OCI-LY7 (cell line): ENCODE measurements at regions of chr14 and their contacts with region 1.

Region 1: GRCh38 chr14:77616454-77617229 is at the start of gene SPTLC2:
- DNase-seq: peak; percentile 99
- H3K4me3 ChIP-seq: peak within 1 kb of the TSS; percentile 95
- H3K27ac ChIP-seq: peak within 1 kb of the TSS; percentile 42
- H3K4me1 ChIP-seq: peaks cover 40% of the 10 kb centered on the region
- CTCF ChIP-seq: peak; percentile 70
- total RNA-seq, gene SPTLC2: 14.7 and 19.6 TPM in 2 replicates

Region 2: DNA sequence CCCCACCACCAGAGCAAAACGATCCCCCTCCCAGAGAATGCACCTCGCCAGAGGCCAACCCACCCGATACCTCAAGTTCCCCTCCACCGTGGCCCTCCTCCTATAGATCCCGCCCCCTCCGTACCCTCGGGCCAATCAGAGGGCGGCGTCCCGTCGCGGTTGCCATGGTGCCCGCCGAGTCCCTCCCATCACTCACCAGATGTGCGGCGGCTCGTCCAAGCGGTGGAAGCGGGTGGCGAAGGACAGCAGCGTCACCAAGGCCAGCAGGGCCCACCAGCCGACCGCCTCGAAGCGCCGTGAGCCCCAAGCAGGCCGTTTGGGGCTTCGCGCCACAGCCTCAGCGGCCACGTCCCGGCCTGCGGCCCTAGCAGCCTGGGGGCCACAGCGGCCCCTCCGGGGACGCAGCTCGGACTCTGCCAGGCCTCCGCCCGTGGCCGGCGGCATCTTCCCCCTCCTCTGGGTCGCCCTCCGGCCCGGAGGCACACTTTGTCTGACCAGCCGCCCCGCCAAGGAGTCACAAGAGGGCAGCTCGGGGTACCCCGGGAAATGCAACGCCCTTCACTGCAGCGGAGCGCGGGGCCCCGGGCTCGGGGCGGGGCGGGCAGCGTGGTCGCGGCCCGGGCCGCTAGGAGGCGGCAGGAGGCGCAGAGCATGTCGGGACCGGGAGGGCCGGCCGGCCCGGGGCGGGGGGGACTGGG is 296.3 kb before region 1 on chr14 and contains the start of gene POMT2:
- CTCF ChIA-PET with region 1: no interaction called
- POLR2A ChIA-PET with region 1: no interaction called
- intact Hi-C with region 1: loop called (anchors 1 kb)
- DNase-seq: peak; percentile 92
- H3K4me3 ChIP-seq: peak within 1 kb of the TSS; percentile 81
- H3K27ac ChIP-seq: peak within 1 kb of the TSS; percentile 80
- H3K4me1 ChIP-seq: peaks cover 25% of the 10 kb centered on the region
- CTCF ChIP-seq: peak; percentile 51; the same call in 1 of the 2 replicates
- total RNA-seq, gene POMT2: 5.9 and 8.2 TPM in 2 replicates

Region 3: DNA sequence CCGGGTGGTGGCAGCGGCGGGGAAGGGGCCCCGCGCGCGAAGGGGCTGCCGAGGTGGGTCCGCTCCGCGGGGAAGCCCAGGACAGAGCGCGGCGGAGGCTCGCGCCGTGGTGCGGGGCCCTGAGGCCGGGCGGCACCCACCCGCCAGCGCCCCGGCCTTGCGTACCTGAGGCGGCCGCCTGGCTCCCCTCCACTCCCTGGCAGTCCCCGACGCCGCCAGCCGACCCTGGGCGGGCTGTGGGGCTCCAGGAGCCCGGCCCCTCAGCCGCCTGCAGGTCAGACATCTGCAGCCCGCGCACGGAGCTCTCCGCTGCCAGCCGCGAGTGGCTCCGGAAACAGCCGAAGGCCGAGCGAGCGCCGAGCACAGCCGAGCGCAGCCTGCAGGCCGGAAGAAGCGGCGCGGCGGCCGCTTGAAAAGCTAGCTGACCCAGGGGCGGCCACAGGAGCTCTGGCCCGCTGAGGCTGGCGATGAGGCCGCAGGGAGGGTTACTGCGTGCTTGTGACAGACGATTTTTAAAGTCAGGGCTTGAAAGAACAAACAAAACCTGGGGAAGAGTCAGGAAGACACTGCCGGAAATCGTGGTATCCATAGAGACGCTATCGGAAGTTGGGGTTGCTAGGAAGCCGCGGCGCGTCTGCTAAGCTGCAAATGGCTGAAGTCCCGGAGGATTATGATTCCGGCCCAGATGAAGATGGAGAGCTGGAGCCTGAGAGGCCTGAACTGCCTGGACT is 239.7 kb before region 1 on chr14 and contains the starts of genes SAMD15 and TMED8:
- CTCF ChIA-PET with region 1: no interaction called
- POLR2A ChIA-PET with region 1: no interaction called
- intact Hi-C with region 1: loop called (anchors 5 kb)
- DNase-seq: peak; percentile 87
- H3K4me3 ChIP-seq: peak within 1 kb of the TSS; percentile 87
- H3K27ac ChIP-seq: peak within 1 kb of the TSS; percentile 96
- H3K4me1 ChIP-seq: peaks cover 32% of the 10 kb centered on the region
- CTCF ChIP-seq: peak; percentile 31; the same call in 1 of the 2 replicates
- total RNA-seq, gene SAMD15: 1.1 and 1.6 TPM in 2 replicates
- total RNA-seq, gene TMED8: 19.5 and 21.9 TPM in 2 replicates

Region 4: DNA sequence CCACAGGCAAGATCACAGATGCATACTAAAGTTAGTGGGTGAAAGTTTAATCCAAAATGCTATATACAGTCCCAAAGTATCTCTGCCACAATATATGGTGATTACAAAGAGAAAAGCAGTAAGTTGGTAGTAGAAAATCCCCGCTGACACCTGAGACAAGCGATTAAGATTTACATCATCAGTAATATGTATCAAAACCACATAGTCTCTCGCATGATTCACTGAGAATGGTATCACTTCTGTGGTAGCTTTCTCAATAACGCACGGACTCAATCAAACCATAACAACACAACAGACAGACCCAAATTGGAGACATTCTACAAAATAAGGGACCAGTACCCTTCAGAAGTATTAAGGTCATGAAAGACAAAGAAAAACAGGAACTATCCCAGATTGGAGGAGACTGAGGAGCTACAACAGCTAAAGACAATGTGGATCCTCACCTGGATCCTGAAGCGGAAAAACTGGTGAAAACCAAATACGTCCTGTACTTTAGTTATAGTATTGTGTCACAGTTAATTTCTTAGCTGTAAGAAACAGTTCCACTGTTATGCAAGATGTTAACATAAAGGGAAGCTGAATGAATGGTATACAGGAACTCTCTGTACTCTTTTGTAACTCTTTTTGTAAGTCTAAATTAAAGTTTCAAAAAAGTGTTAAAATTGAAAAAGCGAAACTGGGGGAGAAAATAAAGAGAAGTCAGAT is 51.2 kb before region 1 on chr14:
- CTCF ChIA-PET with region 1: no interaction called
- POLR2A ChIA-PET with region 1: no interaction called
- intact Hi-C with region 1: no loop called
- DNase-seq: no peak
- H3K4me3 ChIP-seq: no peak overlapping the region
- H3K27ac ChIP-seq: no peak overlapping the region
- H3K4me1 ChIP-seq: no peaks in the 10 kb centered on the region
- CTCF ChIP-seq: no peak

Region 5: DNA sequence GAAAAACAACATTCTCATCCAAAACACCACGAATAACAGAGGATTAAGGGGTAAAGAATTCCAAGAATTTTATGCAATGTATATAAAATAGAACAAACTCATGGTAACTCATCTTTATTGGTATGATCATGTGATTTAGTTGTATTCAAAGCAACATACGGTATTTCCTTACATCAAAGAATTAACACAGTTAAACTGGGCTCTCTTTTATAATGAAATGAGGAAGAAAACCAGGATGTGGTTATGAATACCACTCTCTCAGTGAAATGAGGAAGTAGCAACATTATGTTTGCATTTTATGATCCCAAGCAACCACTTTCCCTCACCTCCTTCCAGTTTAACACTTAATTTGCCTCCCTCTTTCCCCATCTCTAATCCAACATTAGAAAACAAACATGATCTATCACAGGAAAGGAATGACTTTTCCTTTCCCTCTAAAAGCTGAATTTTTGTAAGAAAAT is 23.1 kb before region 1 on chr14:
- CTCF ChIA-PET with region 1: no interaction called
- POLR2A ChIA-PET with region 1: interaction called, 12 read pairs
- intact Hi-C with region 1: loop called (anchors 1 kb)
- DNase-seq: peak; percentile 89
- H3K4me3 ChIP-seq: peak overlapping the region; percentile 46
- H3K27ac ChIP-seq: peak overlapping the region; percentile 91
- H3K4me1 ChIP-seq: peaks cover 87% of the 10 kb centered on the region
- CTCF ChIP-seq: no peak

Region 6: GRCh38 chr14:77603654-77604255 is 12.9 kb before region 1 on chr14:
- CTCF ChIA-PET with region 1: interaction called, 3 read pairs
- POLR2A ChIA-PET with region 1: interaction called, 12 read pairs
- intact Hi-C with region 1: no loop called
- DNase-seq: no peak
- H3K4me3 ChIP-seq: no peak overlapping the region
- H3K27ac ChIP-seq: no peak overlapping the region
- H3K4me1 ChIP-seq: peaks cover 45% of the 10 kb centered on the region
- CTCF ChIP-seq: peak; percentile 73